Mammary epithelial cell (primary cell): ENCODE measurements at regions of chr10 and their contacts with region 1.

Region 1: DNA sequence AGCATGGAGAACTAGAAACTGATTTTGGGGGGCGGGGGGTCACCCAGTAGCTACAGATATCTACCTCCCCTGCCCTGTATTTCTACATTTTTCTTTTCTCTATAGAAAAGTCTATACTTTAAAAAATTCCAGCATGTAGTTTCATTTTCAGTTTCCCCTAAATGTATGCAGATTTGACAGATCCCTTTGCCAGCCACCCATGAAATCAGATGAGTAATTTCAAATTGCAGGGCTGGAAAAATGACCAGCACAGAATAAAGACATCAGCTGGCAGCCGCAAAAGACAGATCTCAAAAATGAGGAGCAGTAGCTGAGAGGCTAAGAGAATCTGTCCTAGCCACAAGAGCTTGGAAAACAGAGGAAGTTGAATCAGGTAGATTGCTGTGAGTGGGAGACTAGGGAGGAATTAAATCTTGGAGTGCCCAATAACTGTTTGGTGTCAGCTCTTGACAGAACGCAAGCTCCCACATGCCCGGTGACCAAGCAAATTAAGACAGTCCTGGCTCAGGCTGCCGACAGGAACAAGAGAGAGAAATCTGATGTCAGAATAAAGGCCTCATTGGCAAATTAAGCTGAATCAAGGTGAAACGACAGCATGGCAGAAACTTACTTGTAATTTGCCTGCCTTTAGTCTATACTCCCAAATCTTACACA is 24.5 kb downstream of the ADRB1 start:
- DNase-seq: peak; percentile 90
- H3K4me3 ChIP-seq: peak overlapping the region; percentile 20 to 31 (median 28)
- H3K27ac ChIP-seq: peak overlapping the region; percentile 33
- H3K4me1 ChIP-seq: peaks cover 16% of the 10 kb centered on the region
- H3K27me3 ChIP-seq: no peaks in the 10 kb centered on the region
- CTCF ChIP-seq: no peak

Region 2: DNA sequence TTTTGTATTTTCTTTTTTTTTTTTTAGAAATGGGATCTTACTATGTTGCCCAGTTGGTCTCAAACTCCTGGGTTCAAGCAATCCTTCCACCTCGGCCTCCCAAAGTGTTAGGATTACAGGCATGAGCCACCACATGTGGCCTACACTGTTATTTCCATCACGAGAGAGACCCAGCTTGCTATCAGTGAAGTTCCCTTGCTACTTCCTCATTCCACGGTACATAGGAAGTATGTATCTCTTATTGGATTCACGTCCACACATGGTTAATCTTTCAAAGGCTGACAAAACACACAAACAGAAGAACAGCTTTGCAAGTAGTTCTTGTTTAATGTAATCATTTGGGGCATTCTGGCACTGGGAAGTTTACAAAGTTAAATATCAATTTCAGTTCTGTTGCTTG is 265.2 kb before region 1 on chr10:
- CTCF ChIA-PET with region 1: interaction called, 10 read pairs
- dilution Hi-C with region 1: no loop called
- in situ Hi-C with region 1: no loop called
- intact Hi-C with region 1: loop called (anchors 1 kb)
- DNase-seq: no peak
- H3K4me3 ChIP-seq: no peak overlapping the region
- H3K27ac ChIP-seq: no peak overlapping the region
- H3K4me1 ChIP-seq: no peaks in the 10 kb centered on the region
- H3K27me3 ChIP-seq: peaks cover 4% of the 10 kb centered on the region
- CTCF ChIP-seq: no peak

Region 3: DNA sequence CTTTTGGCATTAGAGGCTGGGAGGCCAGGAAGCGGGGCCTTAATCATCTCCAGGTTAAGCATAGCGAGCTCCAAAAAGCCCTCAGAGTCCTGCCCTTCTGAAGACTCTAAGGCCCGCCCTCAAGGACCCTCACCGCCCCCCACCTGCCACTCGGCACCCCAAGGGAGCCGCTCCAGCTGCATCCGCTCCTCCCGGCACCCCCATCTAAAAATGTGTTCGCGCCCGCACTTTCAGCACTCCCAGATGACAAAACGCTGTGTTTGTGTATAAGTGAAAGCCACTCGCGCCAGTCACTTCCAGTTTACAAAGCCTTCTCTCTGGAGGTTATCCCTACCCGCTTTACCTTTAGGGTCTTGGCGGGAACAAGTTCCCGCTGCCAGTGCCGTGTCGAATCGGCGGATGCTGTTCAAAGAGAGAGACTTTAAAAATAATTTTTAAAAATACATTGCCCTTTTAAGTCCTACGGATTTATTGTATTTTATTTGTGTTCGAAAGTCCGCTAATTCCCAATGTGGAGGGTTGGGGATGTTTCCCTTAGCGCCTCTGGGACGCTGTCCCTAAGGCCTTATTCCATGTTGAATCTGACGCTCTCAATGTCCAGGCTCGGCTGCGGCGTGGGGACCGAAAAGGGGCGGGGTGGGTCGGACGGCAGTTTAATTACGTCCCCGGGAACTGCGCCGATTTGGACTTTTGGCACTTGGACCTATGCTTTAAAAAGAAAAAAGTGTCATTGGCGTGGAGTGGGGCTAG is 214.0 kb before region 1 on chr10 and contains the starts of genes DCLRE1A and NHLRC2:
- CTCF ChIA-PET with region 1: no interaction called
- dilution Hi-C with region 1: no loop called
- in situ Hi-C with region 1: no loop called
- intact Hi-C with region 1: loop called (anchors 10 kb)
- DNase-seq: peak; percentile 78
- H3K4me3 ChIP-seq: peak within 1 kb of the TSS; percentile 90 to 95 (median 91)
- H3K27ac ChIP-seq: peak within 1 kb of the TSS; percentile 89
- H3K4me1 ChIP-seq: peaks cover 16% of the 10 kb centered on the region
- H3K27me3 ChIP-seq: no peaks in the 10 kb centered on the region
- CTCF ChIP-seq: no peak
- total RNA-seq, gene DCLRE1A: 6.5 TPM
- total RNA-seq, gene NHLRC2: 17.5 to 29.7 TPM

Region 4: DNA sequence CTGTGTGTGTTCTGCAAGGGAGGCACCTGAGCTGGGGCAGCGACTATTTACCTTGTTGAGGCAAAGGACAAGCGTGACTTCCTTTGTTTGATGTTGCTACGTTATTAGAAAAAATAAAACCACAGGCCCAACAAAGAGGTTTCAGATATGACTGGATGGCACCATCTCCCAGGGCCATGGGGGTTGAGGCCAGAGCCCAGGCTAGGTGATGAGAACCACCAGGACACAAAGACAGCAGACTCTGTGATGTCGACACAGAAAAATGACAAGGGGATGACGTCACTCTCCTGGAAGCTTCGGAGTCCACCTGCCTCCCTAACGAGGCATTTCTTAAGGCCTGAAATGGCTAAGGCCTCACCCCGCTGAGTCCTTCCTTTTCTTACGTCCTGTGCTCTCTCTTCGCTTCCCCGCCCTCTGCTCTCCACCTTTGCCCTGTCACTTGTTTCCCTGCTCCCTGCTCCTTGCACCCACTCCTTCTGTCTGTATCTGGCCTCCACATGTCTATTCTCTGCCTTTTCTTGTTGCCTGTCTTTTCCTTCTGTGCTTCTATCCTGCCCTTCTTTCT is 107.5 kb before region 1 on chr10:
- CTCF ChIA-PET with region 1: no interaction called
- dilution Hi-C with region 1: loop called (anchors 5 kb)
- in situ Hi-C with region 1: no loop called
- intact Hi-C with region 1: no loop called
- DNase-seq: peak; percentile 46
- H3K4me3 ChIP-seq: no peak overlapping the region
- H3K27ac ChIP-seq: no peak overlapping the region
- H3K4me1 ChIP-seq: peaks cover 41% of the 10 kb centered on the region
- H3K27me3 ChIP-seq: no peaks in the 10 kb centered on the region
- CTCF ChIP-seq: no peak

Region 5: GRCh38 chr10:113982769-113983168 is 85.4 kb before region 1 on chr10:
- CTCF ChIA-PET with region 1: no interaction called
- dilution Hi-C with region 1: no loop called
- in situ Hi-C with region 1: no loop called
- intact Hi-C with region 1: loop called (anchors 10 kb)
- DNase-seq: no peak
- H3K4me3 ChIP-seq: no peak overlapping the region
- H3K27ac ChIP-seq: no peak overlapping the region
- H3K4me1 ChIP-seq: no peaks in the 10 kb centered on the region
- H3K27me3 ChIP-seq: no peaks in the 10 kb centered on the region
- CTCF ChIP-seq: no peak

Region 6: DNA sequence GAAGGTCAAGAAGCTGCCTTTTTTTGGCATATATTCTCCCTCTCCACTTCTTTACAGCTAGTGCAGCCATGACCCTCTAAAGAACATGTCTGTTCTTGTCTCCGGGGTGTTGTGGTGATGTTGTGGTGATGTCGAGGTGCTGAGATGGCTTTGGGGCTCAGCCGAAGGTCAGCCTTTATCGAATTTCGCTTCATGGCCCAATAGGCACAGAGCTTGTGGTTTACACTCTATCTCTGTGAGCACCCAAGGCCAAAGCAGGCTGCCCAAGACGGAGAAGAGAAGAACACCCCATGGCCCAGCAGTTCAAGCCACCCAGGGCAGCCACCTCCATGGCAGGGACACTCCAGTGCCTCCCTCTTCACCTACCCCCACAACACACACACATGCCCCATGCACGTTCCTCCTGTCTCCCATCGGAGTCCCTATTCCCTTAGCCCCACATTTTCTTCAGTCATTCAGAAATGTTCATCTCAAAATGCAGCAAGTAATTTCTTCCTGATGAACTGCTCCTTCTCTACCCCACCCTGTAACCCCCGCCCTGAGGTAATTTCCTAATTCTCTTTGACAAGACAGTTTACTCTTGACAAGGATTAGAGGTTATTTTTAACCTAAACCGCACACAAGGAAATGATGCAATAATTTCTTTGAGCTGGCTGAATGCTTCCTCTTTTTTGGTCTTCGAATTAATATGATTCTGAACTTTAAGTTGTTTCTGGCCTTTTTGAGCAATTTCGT is 43.1 kb before region 1 on chr10:
- CTCF ChIA-PET with region 1: interaction called, 5 read pairs
- dilution Hi-C with region 1: no loop called
- in situ Hi-C with region 1: no loop called
- intact Hi-C with region 1: loop called (anchors 1 kb)
- DNase-seq: no peak
- H3K4me3 ChIP-seq: no peak overlapping the region
- H3K27ac ChIP-seq: no peak overlapping the region
- H3K4me1 ChIP-seq: peaks cover 39% of the 10 kb centered on the region
- H3K27me3 ChIP-seq: no peaks in the 10 kb centered on the region
- CTCF ChIP-seq: no peak

Region 7: GRCh38 chr10:114151486-114151885 is 83.3 kb after region 1 on chr10:
- CTCF ChIA-PET with region 1: no interaction called
- dilution Hi-C with region 1: no loop called
- in situ Hi-C with region 1: no loop called
- intact Hi-C with region 1: no loop called
- DNase-seq: peak; percentile 94
- H3K4me3 ChIP-seq: no peak overlapping the region
- H3K27ac ChIP-seq: peak overlapping the region; percentile 94
- H3K4me1 ChIP-seq: peaks cover 17% of the 10 kb centered on the region
- H3K27me3 ChIP-seq: no peaks in the 10 kb centered on the region
- CTCF ChIP-seq: no peak

Region 8: GRCh38 chr10:114174695-114175190 is 106.6 kb after region 1 on chr10:
- CTCF ChIA-PET with region 1: no interaction called
- dilution Hi-C with region 1: no loop called
- in situ Hi-C with region 1: no loop called
- intact Hi-C with region 1: no loop called
- DNase-seq: peak; percentile 81
- H3K4me3 ChIP-seq: peak overlapping the region; percentile 90 to 99 (median 99)
- H3K27ac ChIP-seq: peak overlapping the region; percentile 88
- H3K4me1 ChIP-seq: peaks cover 9% of the 10 kb centered on the region
- H3K27me3 ChIP-seq: no peaks in the 10 kb centered on the region
- CTCF ChIP-seq: no peak